Dendritic cell treated with granulocyte-macrophage colony-stimulating factor and Interleukin-4, amounts not matched to agents 40 ng/mL and 50 ng/mL, for 4 days (primary cell): ENCODE measurements at regions of chr6 and their contacts with region 1.

Region 1: GRCh38 chr6:33271458-33272274 is at the starts of genes RPS18 and VPS52:
- H3K4me3 Mint-ChIP-seq: peak within 1 kb of the TSS; percentile 94
- H3K27ac Mint-ChIP-seq: peak within 1 kb of the TSS; percentile 100
- H3K4me1 Mint-ChIP-seq: peaks cover 82% of the 10 kb centered on the region
- H3K27me3 Mint-ChIP-seq: no peaks in the 10 kb centered on the region

Region 2: DNA sequence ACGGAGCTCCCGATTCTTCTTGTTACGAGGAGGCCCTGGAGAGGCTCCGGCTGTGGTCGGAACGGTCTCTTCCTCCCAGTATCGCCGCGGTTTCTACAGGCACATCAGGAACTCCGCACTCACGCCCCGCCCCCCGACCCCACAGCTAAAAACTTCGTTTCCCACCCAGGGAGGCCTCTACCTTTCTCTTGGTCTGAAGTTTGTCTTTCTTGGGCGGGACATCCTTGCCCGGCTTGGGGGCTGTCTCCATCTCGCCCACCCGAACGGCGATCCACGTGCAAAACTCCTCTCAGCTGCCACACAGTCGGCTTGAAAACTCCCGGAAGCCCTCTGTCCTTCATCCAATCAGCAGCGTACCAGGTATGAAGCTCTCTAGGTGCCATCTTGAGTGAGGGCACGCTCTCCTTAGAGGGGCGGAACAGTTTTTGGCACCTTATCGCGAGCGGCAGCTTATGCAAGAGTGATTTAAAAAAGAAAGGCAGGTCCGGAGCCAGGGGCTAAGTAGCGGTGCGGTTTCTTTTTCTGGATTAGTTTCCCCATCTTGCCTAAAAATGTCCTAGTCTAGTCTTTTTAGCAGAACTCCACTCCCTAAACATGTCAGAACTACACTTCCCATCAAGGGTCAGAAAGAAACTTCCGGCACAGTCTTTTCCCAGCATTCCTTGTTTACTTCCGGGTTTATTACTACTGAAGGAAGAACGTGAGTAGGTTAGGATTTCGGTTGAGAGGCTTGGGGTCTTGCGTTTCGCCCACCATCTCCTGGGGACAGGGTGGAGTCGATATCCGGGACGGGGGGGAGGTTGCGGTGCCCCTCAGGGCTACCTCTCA is 17.5 kb after region 1 on chr6 and contains the starts of genes PFDN6 and WDR46:
- intact Hi-C with region 1: loop called (anchors 1 kb)
- H3K4me3 Mint-ChIP-seq: peak within 1 kb of the TSS; percentile 92
- H3K27ac Mint-ChIP-seq: peak within 1 kb of the TSS; percentile 86
- H3K4me1 Mint-ChIP-seq: peaks cover 53% of the 10 kb centered on the region
- H3K27me3 Mint-ChIP-seq: no peaks in the 10 kb centered on the region

Region 3: GRCh38 chr6:33497157-33497556 is 225.5 kb after region 1 on chr6:
- intact Hi-C with region 1: no loop called
- H3K4me3 Mint-ChIP-seq: no peak overlapping the region
- H3K27ac Mint-ChIP-seq: no peak overlapping the region
- H3K4me1 Mint-ChIP-seq: no peaks in the 10 kb centered on the region
- H3K27me3 Mint-ChIP-seq: peaks cover 6% of the 10 kb centered on the region